GM12878 (cell line): ENCODE measurements at regions of chr17 and their contacts with region 1.

Region 1: DNA sequence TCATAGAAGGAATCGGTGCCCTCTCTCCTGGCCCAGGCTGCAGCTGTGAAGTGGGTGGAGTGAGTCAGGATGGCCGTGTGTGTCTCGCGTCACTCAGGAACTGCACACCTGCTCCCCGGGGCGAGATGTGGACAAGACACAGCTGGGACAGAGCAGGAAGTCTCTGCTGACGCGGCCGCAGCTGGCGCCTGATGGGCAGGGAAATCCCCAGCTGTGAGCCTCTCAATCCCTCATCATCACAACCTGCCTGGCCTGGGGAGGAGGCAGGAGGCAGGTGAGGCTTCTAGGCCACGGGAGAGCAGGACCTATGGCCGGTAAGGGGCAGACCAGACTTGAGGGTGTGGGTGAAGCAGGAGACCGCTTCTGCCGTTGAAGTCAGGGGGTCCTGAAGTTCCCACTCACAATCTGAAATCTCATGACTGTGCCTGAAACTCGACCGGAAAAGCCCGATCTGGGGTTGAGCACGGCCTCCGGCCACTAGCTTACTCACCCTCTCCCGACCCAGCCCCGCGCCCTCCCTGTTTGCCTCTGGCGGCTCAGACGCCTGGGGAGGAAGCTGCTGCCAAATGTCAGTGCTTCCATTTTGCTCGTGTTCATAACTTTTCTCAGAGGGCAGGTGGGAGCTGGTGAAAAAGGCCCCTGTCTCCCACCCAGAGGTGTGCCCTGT is 1.1 kb upstream of the TRPV3 start:
- DNase-seq: peak; percentile 87
- ATAC-seq: peak; percentile 74
- H3K4me3 ChIP-seq: peak overlapping the region; percentile 28; the same call in 1 of the 2 replicates
- H3K27ac ChIP-seq: peak overlapping the region; percentile 92
- H3K4me1 ChIP-seq: peaks cover 51% of the 10 kb centered on the region
- H3K27me3 ChIP-seq: no peaks in the 10 kb centered on the region
- CTCF ChIP-seq: no peak
- EP300 ChIP-seq: peak; percentile 89 to 92
- POLR2A ChIP-seq: peak; percentile 97
- RAD21 ChIP-seq: no peak

Region 2: GRCh38 chr17:3512505-3513171 is 46.1 kb before region 1 on chr17:
- CTCF ChIA-PET with region 1: no interaction called
- POLR2A ChIA-PET with region 1: no interaction called
- RAD21 ChIA-PET with region 1: no interaction called
- SMC1A ChIA-PET with region 1: no interaction called
- in situ Hi-C with region 1: no loop called
- intact Hi-C with region 1: no loop called
- DNase-seq: no peak
- ATAC-seq: no peak
- H3K4me3 ChIP-seq: no peak overlapping the region
- H3K27ac ChIP-seq: no peak overlapping the region
- H3K4me1 ChIP-seq: no peaks in the 10 kb centered on the region
- H3K27me3 ChIP-seq: no peaks in the 10 kb centered on the region
- CTCF ChIP-seq: no peak
- EP300 ChIP-seq: no peak
- POLR2A ChIP-seq: no peak
- RAD21 ChIP-seq: no peak

Region 3: DNA sequence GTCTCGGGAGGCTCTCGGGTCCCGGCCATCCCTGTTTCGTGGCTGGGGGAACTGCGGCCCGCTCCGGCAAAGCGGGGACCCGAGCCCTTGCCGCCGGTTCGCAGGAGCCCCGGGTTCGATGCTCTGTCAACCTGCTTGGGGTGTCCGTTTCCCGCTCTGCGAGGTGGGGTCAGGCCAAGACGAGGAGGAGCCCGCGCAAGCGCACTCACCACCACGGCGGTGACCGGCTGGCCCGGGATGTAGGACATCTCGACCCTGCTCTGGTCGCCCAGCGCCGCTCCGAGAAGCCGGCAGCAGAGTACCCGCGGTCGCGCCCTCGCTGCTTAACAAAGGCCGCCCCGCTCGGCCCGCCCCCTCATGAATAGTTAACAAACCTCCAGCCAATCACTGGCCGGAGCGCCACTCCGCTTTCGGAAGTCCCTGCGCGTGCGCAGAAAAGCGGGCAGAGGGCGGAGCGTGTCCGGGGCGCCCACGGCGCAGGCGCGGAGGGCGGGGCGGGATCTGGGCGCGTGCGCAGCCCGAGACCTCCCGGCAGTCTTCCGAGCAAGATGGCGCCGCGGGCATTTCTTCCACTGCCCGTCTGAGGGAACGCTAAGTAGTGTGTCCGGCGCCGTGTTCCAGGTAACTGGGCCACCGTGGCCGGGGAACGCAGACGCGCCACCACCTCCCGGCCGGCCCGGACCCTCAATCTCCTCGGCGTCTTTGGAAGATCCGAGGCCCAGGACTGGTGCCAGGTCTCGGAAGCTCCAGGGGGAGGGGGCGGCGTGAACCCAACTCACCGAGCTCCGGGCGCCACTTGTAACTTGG is 109.7 kb after region 1 on chr17 and contains the starts of genes EMC6 and TAX1BP3:
- CTCF ChIA-PET with region 1: no interaction called
- POLR2A ChIA-PET with region 1: no interaction called
- RAD21 ChIA-PET with region 1: no interaction called
- SMC1A ChIA-PET with region 1: no interaction called
- in situ Hi-C with region 1: no loop called
- intact Hi-C with region 1: loop called (anchors 10 kb)
- DNase-seq: peak; percentile 86
- ATAC-seq: peak; percentile 97
- H3K4me3 ChIP-seq: peak within 1 kb of the TSS; percentile 84
- H3K27ac ChIP-seq: peak within 1 kb of the TSS; percentile 86
- H3K4me1 ChIP-seq: peaks cover 8% of the 10 kb centered on the region
- H3K27me3 ChIP-seq: no peaks in the 10 kb centered on the region
- CTCF ChIP-seq: no peak
- EP300 ChIP-seq: no peak
- POLR2A ChIP-seq: peak; percentile 96
- RAD21 ChIP-seq: no peak
- polyA plus RNA-seq, gene EMC6: 5.1 to 32.2 TPM
- polyA plus RNA-seq, gene TAX1BP3: 1.00 to 4.7 TPM